Panc1 (cell line): ENCODE measurements at regions of chr15 and their contacts with region 1.

Region 1: GRCh38 chr15:69200832-69201745 is 40.7 kb downstream of the GLCE start:
- DNase-seq: no peak
- ATAC-seq: no peak
- H3K4me3 ChIP-seq: no peak overlapping the region
- H3K27ac ChIP-seq: no peak overlapping the region
- H3K4me1 ChIP-seq: no peaks in the 10 kb centered on the region
- H3K27me3 ChIP-seq: no peaks in the 10 kb centered on the region
- CTCF ChIP-seq: no peak

Region 2: GRCh38 chr15:69190091-69190490 is 11.0 kb before region 1 on chr15:
- CTCF ChIA-PET with region 1: no interaction called
- POLR2A ChIA-PET with region 1: no interaction called
- in situ Hi-C with region 1: no loop called
- intact Hi-C with region 1: no loop called
- DNase-seq: no peak
- ATAC-seq: no peak
- H3K4me3 ChIP-seq: no peak overlapping the region
- H3K27ac ChIP-seq: no peak overlapping the region
- H3K4me1 ChIP-seq: no peaks in the 10 kb centered on the region
- H3K27me3 ChIP-seq: no peaks in the 10 kb centered on the region
- CTCF ChIP-seq: no peak

Region 3: GRCh38 chr15:69315402-69316110 is 114.5 kb after region 1 on chr15:
- CTCF ChIA-PET with region 1: no interaction called
- POLR2A ChIA-PET with region 1: interaction called, 17 read pairs
- in situ Hi-C with region 1: no loop called
- intact Hi-C with region 1: no loop called
- DNase-seq: no peak
- ATAC-seq: no peak
- H3K4me3 ChIP-seq: no peak overlapping the region
- H3K27ac ChIP-seq: no peak overlapping the region
- H3K4me1 ChIP-seq: no peaks in the 10 kb centered on the region; the same call in 1 of the 2 replicates
- H3K27me3 ChIP-seq: no peaks in the 10 kb centered on the region
- CTCF ChIP-seq: no peak